Activated B cell treated with CpG ODN at 0.5 μM for 24 hours (primary cell): ENCODE measurements at regions of chr5 and their contacts with region 1.

Region 1: GRCh38 chr5:157917899-157918809 is 59.2 kb upstream of the CLINT1 start:
- DNase-seq: no peak
- ATAC-seq: no peak
- H3K4me3 Mint-ChIP-seq: no peak overlapping the region
- H3K27ac Mint-ChIP-seq: peak overlapping the region; percentile 89
- H3K4me1 Mint-ChIP-seq: peaks cover 34% of the 10 kb centered on the region
- H3K27me3 Mint-ChIP-seq: no peaks in the 10 kb centered on the region
- CTCF ChIP-seq: no peak

Region 2: DNA sequence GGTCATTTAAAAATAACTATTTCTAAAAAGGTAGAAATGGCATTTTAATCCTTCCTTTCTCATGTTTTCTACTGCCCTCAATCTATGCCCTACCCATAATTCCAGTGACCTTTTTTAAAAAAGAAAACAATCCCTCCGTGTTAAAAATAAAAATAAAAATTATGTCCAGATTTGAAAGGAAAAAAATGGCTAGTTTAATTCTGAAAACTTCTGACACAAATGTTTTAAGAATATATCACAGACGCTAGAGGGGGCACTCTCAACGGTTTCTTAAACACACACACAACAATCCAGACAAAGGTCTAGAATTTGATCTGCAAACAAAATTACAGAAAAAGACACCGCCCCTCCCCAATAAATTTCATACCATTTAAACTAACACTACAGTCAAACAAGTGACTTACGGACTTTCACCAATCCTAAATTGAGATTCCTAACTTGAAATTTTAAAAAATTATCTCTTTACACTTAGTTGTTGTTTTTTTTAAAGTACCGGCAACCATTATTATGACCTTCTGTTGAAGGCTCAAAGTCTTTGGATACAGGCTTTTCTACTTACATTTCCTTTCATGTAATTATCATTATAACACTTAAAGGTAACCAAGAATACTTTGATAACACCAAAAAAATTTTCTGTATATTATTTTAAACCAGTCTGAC is 97.4 kb before region 1 on chr5:
- CTCF ChIA-PET with region 1: interaction called, 10 read pairs
- POLR2A ChIA-PET with region 1: no interaction called
- intact Hi-C with region 1: loop called (anchors 1 kb)
- DNase-seq: no peak
- ATAC-seq: no peak
- H3K4me3 Mint-ChIP-seq: no peak overlapping the region
- H3K27ac Mint-ChIP-seq: peak overlapping the region; percentile 12
- H3K4me1 Mint-ChIP-seq: peaks cover 25% of the 10 kb centered on the region
- H3K27me3 Mint-ChIP-seq: no peaks in the 10 kb centered on the region
- CTCF ChIP-seq: no peak

Region 3: DNA sequence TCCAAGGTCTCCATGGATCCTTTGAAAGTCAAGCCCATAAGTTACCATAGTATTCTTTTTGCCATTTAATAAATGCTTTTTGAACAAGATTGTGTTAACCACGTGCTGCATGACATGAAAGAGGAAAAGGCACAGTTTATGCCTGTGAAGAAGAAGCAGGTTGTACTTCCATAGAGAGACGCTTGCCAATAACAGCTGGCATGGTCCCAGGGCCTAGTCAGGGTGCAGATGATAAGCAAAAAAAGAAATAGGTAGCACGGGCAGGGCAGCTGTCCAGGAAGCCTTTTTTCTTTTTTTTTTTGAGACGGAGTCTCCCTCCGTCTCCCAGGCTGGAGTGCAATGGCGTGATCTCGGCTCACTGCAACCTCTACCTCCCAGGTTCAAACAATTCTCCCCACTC is 12.6 kb after region 1 on chr5:
- CTCF ChIA-PET with region 1: no interaction called
- POLR2A ChIA-PET with region 1: no interaction called
- intact Hi-C with region 1: no loop called
- DNase-seq: no peak
- ATAC-seq: no peak
- H3K4me3 Mint-ChIP-seq: no peak overlapping the region
- H3K27ac Mint-ChIP-seq: no peak overlapping the region
- H3K4me1 Mint-ChIP-seq: no peaks in the 10 kb centered on the region
- H3K27me3 Mint-ChIP-seq: peaks cover 2% of the 10 kb centered on the region
- CTCF ChIP-seq: no peak